ENCODE measurements at regions of chr18 and their contacts with region 1.

Region 1: DNA sequence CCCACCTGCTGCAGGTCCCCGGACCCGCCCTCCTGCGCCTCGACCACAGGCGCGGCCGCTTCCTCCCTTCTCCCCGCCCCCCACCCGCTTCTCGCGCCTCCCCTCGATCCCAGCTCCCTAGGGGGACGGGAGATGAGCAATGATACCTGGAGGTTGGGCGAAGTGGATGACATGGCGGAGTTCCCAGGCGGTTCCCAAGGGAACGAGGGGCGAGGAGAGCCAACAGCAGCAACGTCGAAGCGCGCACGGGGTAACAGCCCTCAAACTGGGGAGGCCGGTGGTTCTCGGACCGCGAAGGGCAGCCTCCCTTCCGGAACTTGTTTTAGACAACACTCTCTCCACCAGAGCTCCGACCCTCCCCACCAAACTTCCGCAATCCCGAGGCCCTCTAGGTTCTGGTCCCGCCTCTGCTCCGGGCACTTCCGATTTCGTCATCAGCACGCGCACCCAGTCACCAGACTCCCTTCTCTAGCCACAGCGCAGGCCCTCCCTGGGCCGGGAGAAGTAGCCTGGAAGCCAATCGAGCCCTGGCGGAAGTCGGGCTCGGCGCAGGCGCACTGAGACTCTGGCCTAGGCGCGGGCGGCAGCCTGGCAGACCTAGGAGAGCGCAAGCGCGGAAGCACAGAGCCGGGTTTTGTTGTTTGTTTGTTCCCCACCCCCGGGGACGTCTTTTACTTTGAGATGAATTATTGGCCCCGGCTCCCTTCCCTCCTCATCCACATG is at the start of gene VPS4B:
- DNase-seq: peak; percentile 100
- ATAC-seq: peak; percentile 99 to 100
- total RNA-seq, gene VPS4B: 21.4 to 28.5 TPM

Region 2: DNA sequence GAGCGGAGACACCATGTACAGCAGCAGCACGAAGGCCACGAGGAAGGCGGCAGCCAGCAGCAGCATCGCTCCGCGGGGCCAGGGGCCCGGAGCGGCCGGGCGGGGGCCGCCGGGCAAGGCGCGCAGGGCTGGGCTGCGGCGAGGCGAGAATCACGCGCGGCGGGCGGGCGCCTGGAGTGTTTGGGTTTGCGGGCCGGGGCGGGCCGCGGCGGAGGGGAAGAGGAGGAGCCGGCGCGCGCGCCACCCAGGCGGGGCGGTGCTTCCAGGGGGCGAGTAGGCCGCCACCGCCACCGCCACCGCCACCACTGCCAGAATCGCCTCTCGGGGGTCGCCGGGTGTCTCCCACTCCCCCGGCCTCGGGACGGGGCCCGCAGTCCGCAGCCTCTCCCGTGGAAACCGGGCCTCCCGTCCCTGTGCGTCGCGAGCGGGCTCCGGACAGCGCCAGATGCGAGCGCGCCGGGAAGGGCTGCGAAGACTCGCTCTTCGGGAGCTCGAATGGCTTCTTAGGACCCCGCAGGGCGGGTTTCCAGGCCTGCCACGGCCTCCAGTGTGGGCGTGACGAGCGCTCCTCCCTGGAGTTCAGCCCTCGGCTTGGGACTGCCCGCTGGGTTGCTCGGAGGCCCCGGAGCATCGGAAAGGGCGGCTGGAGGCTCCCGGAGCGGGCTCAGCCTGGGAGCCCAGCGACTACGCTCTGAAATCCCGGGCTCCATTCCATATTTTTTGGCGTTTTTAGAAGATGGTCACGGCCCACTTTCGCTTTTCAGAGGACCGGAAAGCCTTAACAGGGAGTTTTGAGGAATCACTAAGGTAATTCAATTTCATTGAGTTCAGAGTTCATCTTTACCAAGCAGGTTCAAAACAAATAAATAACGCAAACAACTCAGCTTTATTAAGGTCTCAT is 54.9 kb before region 1 on chr18 and contains the start of gene KDSR:
- intact Hi-C with region 1: loop called (anchors 5 to 10 kb)
- DNase-seq: peak; percentile 97
- ATAC-seq: peak; percentile 96 to 98
- total RNA-seq, gene KDSR: 48.0 to 58.1 TPM